ENCODE measurements at regions of chr1 and their contacts with region 1.

Region 1: GRCh38 chr1:192477630-192478029 is 97.9 kb upstream of the RGS1 start:
- DNase-seq: no peak
- ATAC-seq: no peak
- H3K4me3 ChIP-seq: no peak overlapping the region
- H3K4me1 ChIP-seq: no peaks in the 10 kb centered on the region
- CTCF ChIP-seq: no peak

Region 2: GRCh38 chr1:192609110-192610079 is 131.8 kb after region 1 on chr1:
- intact Hi-C with region 1: loop called (anchors 5 kb)
- DNase-seq: peak; percentile 44 to 75 (median 63)
- ATAC-seq: peak; percentile 92
- H3K4me3 ChIP-seq: no peak overlapping the region
- H3K4me1 ChIP-seq: no peaks in the 10 kb centered on the region
- CTCF ChIP-seq: no peak

Region 3: DNA sequence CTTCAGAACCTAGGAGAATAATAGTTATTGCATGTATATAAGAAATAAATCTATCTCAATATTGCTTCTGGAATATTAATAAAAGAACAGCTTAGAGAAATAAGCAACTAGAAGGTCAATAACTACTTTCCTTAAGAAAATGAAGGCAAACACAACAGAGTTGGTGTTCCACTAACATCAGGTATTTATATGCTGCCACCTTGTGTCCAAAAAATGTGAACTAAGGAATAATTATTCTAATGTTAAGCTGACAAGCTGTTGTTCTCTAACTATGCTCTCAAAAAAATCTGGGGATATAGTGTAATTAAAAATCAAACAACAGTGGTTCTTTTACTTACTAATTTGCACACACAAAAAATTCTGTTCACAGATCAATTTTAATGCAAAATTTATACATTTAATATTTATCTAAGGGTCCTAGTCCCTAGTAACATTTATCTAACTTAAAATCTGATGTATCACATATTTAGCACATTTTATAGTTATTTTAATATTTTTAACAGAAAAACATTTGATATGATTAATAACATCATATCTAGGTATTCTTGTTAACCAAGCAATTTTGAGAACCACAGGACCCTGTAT is 541.9 kb after region 1 on chr1:
- intact Hi-C with region 1: loop called in 1 of 2 experiments (anchors 10 kb)
- DNase-seq: peak in 1 of 3 donors; percentile 62
- ATAC-seq: peak; percentile 67
- H3K4me3 ChIP-seq: no peak overlapping the region
- H3K4me1 ChIP-seq: no peaks in the 10 kb centered on the region
- CTCF ChIP-seq: no peak